Caco-2 (cell line): ENCODE measurements at regions of chr3 and their contacts with region 1.

Region 1: DNA sequence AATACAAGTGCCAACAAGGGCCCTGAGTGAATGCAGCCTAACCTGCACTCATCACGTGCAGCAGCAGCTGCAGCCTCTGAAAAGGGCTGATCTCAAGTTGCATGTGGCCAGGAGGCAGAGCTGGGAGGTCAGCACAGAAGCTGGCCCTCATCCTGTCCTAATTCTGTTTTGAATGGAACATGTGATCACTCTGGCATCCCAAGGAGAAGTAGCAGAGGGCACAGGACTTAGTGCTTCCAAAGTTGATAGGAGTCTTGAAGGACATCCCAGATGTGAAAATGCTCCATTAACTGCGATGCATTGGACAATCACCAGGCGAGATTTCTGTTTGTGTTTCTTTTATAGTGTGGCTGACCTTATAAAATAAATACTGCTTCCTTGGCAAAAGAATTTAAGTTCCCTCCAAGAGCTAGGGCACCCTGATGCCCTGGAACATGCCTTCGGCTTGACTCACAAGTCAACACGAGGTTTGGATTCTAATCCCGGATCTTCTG is 31.6 kb upstream of the STAG1 start:
- DNase-seq: no peak
- H3K4me3 ChIP-seq: no peak overlapping the region
- H3K4me3 Mint-ChIP-seq: no peak overlapping the region
- H3K27ac Mint-ChIP-seq: no peak overlapping the region
- H3K4me1 ChIP-seq: peaks cover 37% of the 10 kb centered on the region
- H3K4me1 Mint-ChIP-seq: peaks cover 21% of the 10 kb centered on the region
- H3K27me3 ChIP-seq: no peaks in the 10 kb centered on the region
- H3K27me3 Mint-ChIP-seq: no peaks in the 10 kb centered on the region
- CTCF ChIP-seq: no peak

Region 2: DNA sequence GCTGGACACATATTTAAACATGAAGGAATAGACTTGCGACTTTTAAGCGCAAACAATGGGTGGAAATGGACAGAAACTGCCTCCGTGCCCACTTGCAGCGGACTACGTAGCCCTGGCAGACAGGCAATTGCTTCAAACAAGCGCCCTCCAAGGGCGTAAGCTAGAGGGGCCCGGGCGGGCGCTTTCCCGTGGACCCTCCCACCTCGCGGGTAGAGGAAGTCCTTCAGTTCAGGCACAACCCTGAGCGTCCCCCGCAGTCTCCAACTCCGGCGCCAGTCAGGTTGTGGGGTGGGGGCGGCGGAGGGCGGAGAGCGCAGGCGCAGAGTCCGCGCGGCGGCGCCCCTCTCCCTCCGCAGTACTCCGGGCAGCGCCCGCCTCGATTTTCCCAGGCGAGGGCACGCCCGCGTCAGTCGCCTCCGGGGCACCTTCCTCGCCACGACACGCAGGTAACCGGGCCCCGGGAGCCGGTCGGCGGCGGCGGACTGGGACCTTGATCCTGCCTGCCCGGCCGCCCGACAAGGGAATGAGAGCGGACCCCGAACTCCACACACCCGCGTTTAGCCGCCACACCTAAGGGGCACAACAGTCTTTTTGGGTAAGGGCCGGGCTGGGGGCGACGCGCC is 35.1 kb after region 1 on chr3 and contains the start of gene SLC35G2:
- CTCF ChIA-PET with region 1: no interaction called
- POLR2A ChIA-PET with region 1: no interaction called
- intact Hi-C with region 1: loop called (anchors 5 kb)
- DNase-seq: peak in 1 of 2 experiments; percentile 51
- H3K4me3 ChIP-seq: peak within 1 kb of the TSS; percentile 59
- H3K4me3 Mint-ChIP-seq: peak within 1 kb of the TSS; percentile 93
- H3K27ac Mint-ChIP-seq: peak within 1 kb of the TSS; percentile 70
- H3K4me1 ChIP-seq: 0 out of 2 replicates have a peak, but pooled peaks cover 4% of the 10 kb centered on the region
- H3K4me1 Mint-ChIP-seq: no peaks in the 10 kb centered on the region
- H3K27me3 ChIP-seq: no peaks in the 10 kb centered on the region
- H3K27me3 Mint-ChIP-seq: no peaks in the 10 kb centered on the region
- CTCF ChIP-seq: no peak
- total RNA-seq, gene SLC35G2: 3.8 and 4.2 TPM in 2 replicates

Region 3: GRCh38 chr3:136835089-136835816 is 51.5 kb after region 1 on chr3:
- CTCF ChIA-PET with region 1: no interaction called
- POLR2A ChIA-PET with region 1: no interaction called
- intact Hi-C with region 1: no loop called
- DNase-seq: no peak
- H3K4me3 ChIP-seq: no peak overlapping the region
- H3K4me3 Mint-ChIP-seq: no peak overlapping the region
- H3K27ac Mint-ChIP-seq: no peak overlapping the region
- H3K4me1 ChIP-seq: no peaks in the 10 kb centered on the region
- H3K4me1 Mint-ChIP-seq: no peaks in the 10 kb centered on the region
- H3K27me3 ChIP-seq: no peaks in the 10 kb centered on the region
- H3K27me3 Mint-ChIP-seq: no peaks in the 10 kb centered on the region
- CTCF ChIP-seq: no peak